ENCODE measurements at regions of chr1 and their contacts with region 1.

Region 1: DNA sequence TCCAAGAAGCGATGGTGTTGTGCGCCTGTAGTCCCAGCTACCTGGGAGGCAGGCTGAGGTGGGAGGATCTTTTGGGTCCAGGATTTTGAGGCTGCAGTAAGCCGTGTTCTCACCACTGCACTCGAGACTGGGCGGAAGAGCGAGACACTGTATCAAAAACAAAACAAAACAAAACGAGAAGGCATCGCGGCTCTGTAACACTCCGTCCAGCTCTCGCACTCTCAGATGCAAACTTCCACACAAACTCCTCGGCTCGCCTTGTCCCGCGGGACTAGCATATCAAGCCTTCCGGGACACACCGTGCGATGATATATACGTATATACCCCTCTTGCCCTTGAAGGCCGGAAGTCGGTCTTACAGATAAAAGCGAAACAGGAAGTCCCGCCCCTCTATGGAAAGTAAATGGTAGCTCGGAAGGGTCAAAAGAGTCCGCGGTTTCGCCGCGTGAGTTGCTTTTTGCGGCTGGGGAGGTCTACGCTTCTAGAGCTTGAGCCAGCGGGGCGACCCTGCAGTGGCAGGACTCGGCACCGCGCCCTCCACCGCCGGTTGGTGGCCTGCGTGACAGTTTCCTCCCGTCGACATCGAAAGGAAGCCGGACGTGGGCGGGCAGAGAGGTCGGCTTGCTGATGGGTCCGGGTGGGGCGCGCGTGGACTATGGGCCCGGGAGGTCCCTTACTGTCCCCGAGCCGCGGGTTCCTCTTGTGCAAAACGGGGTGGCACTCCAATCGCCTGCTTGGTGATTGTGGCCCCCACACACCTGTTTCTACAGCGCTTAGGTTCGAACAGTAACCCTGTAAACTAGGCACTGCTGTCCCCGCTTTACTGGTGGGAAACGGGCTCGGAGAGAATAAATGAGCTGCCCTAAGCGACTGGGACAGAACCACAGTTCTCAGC is at the start of gene COA6:
- DNase-seq: peak; percentile 82 to 96 (median 88)
- ATAC-seq: peak; percentile 84
- H3K4me3 ChIP-seq: peak within 1 kb of the TSS; percentile 82 to 97
- H3K4me3 Mint-ChIP-seq: peak within 1 kb of the TSS; percentile 97
- H3K27ac ChIP-seq: peak within 1 kb of the TSS; percentile 88 to 99
- H3K27ac Mint-ChIP-seq: peak within 1 kb of the TSS; percentile 99
- H3K4me1 ChIP-seq: peaks cover 19% of the 10 kb centered on the region
- H3K4me1 Mint-ChIP-seq: peaks cover 49% of the 10 kb centered on the region
- H3K27me3 ChIP-seq: no peaks in the 10 kb centered on the region
- H3K27me3 Mint-ChIP-seq: no peaks in the 10 kb centered on the region
- CTCF ChIP-seq: no peak
- total RNA-seq, gene COA6: 7.2 to 8.9 TPM

Region 2: DNA sequence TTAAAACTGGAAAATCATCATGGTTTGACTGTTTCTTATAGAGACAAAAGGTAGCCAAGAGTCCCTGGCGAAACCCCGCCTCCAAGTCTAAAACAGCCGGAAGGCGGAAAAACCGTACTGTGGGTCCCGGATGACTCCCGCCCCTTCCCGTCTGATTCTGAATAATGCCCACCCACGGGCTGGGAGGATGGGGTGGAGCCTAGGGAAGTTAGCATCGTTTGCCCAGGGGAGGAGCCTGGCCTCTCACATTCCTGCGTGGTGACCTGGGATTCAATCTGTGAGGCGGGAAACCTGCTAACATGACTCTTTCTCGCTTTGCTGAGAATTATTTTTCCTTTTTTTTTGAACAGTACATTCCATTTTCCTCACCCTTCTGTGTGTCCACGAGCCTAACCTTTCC is 634.5 kb before region 1 on chr1:
- CTCF ChIA-PET with region 1: no interaction called
- POLR2A ChIA-PET with region 1: no interaction called
- intact Hi-C with region 1: no loop called
- DNase-seq: no peak
- ATAC-seq: no peak
- H3K4me3 ChIP-seq: no peak overlapping the region
- H3K4me3 Mint-ChIP-seq: no peak overlapping the region
- H3K27ac ChIP-seq: no peak overlapping the region
- H3K27ac Mint-ChIP-seq: no peak overlapping the region
- H3K4me1 ChIP-seq: no peaks in the 10 kb centered on the region
- H3K4me1 Mint-ChIP-seq: no peaks in the 10 kb centered on the region
- H3K27me3 ChIP-seq: no peaks in the 10 kb centered on the region
- H3K27me3 Mint-ChIP-seq: peaks cover 4% of the 10 kb centered on the region
- CTCF ChIP-seq: no peak

Region 3: DNA sequence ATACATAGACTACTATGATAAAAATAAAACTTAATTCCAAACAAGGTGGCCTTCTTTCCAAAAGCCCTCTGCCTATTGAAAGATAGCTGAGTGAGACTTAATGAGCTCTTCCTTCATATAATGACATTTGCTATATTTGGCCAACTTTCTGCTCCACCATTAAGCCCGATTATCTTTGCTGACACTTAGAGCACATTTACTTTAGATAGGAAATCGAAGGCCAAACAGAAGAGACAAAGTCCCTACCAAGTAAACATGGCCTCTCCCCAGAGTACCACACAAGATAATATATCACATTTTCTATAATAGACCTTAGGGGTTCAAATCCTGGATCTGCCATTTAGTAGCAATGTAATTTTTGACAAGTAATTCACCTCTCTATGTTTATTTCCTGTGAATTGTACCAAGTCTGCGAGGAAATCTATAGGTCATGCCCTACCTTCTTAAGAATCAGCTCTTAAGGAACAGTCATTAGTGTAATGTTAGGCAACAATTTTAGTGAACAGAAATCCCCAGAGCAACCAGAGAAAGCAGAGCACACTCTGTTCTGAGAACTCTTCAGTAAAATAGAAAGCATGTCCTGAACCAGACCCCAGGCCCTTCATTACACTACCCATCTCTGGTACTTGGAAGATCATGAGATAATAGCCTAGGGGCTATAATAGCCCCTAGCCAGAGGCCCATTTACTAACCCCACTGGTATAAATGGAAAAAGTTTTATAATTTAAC is 17.4 kb before region 1 on chr1:
- CTCF ChIA-PET with region 1: interaction called, 4 read pairs
- POLR2A ChIA-PET with region 1: interaction called, 24 read pairs
- intact Hi-C with region 1: loop called (anchors 1 to 2 kb)
- DNase-seq: no peak
- ATAC-seq: no peak
- H3K4me3 ChIP-seq: peak overlapping the region in 1 of 2 experiments; percentile 51
- H3K4me3 Mint-ChIP-seq: no peak overlapping the region
- H3K27ac ChIP-seq: no peak overlapping the region
- H3K27ac Mint-ChIP-seq: no peak overlapping the region
- H3K4me1 ChIP-seq: no peaks in the 10 kb centered on the region
- H3K4me1 Mint-ChIP-seq: peaks cover 14% of the 10 kb centered on the region
- H3K27me3 ChIP-seq: no peaks in the 10 kb centered on the region
- H3K27me3 Mint-ChIP-seq: peaks cover 8% of the 10 kb centered on the region
- CTCF ChIP-seq: no peak

Region 4: GRCh38 chr1:234452091-234452954 is 79.0 kb after region 1 on chr1:
- CTCF ChIA-PET with region 1: no interaction called
- POLR2A ChIA-PET with region 1: no interaction called
- intact Hi-C with region 1: no loop called
- DNase-seq: no peak
- ATAC-seq: no peak
- H3K4me3 ChIP-seq: no peak overlapping the region
- H3K4me3 Mint-ChIP-seq: no peak overlapping the region
- H3K27ac ChIP-seq: no peak overlapping the region
- H3K27ac Mint-ChIP-seq: no peak overlapping the region
- H3K4me1 ChIP-seq: no peaks in the 10 kb centered on the region
- H3K4me1 Mint-ChIP-seq: no peaks in the 10 kb centered on the region
- H3K27me3 ChIP-seq: no peaks in the 10 kb centered on the region
- H3K27me3 Mint-ChIP-seq: no peaks in the 10 kb centered on the region
- CTCF ChIP-seq: no peak

Region 5: DNA sequence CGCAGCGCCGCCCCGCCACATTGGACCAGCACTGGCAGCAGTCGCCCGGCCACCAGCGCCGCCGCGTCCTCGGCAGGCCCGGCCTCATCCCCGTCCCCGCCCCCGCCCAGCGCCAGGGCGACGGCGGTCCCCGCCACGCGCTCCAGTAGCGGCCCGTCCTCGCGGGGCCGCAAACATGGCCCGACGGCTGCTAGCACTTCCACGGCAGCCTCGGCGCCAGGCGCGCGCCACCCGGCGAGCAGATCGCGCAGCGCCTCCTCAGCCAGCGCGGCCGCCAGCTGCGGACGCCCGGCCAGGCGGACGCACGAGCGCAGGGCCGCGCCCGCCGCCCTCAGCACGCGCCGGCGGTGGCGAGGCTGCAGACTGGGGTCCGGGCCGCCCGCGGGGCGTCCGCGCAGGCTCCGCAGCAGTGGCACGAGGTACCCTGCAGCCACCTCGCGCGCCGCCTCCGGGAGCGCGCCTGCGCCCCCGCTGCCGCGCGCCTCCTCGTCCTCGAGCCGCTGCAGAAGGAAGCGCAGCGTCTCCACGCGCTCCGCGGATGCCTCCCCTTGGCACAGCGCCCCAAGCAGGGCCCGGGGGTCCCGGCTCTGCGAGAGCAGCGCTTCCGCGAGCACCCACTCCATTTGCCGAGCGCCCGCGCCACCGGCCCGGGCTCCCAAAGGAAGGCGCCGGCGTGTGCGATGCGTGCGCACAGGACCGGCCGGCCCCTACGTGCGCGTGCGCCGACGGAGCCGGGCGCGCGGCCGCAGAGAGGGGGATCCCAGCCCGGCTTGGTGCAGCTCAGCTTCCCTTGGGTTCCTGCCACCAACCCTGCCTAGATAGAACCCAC is 105.4 kb after region 1 on chr1 and contains the start of gene TARBP1:
- CTCF ChIA-PET with region 1: interaction called, 3 read pairs
- POLR2A ChIA-PET with region 1: interaction called, 18 read pairs
- intact Hi-C with region 1: loop called (anchors 1 kb)
- DNase-seq: peak; percentile 53 to 91 (median 72)
- ATAC-seq: peak; percentile 69
- H3K4me3 ChIP-seq: peak within 1 kb of the TSS; percentile 64 to 85
- H3K4me3 Mint-ChIP-seq: peak within 1 kb of the TSS; percentile 90
- H3K27ac ChIP-seq: peak within 1 kb of the TSS; percentile 71 to 75
- H3K27ac Mint-ChIP-seq: peak within 1 kb of the TSS; percentile 96
- H3K4me1 ChIP-seq: peaks cover 33% of the 10 kb centered on the region
- H3K4me1 Mint-ChIP-seq: peaks cover 42% of the 10 kb centered on the region
- H3K27me3 ChIP-seq: no peaks in the 10 kb centered on the region
- H3K27me3 Mint-ChIP-seq: peaks cover 2% of the 10 kb centered on the region
- CTCF ChIP-seq: no peak
- total RNA-seq, gene TARBP1: 38.2 to 39.5 TPM

Region 6: DNA sequence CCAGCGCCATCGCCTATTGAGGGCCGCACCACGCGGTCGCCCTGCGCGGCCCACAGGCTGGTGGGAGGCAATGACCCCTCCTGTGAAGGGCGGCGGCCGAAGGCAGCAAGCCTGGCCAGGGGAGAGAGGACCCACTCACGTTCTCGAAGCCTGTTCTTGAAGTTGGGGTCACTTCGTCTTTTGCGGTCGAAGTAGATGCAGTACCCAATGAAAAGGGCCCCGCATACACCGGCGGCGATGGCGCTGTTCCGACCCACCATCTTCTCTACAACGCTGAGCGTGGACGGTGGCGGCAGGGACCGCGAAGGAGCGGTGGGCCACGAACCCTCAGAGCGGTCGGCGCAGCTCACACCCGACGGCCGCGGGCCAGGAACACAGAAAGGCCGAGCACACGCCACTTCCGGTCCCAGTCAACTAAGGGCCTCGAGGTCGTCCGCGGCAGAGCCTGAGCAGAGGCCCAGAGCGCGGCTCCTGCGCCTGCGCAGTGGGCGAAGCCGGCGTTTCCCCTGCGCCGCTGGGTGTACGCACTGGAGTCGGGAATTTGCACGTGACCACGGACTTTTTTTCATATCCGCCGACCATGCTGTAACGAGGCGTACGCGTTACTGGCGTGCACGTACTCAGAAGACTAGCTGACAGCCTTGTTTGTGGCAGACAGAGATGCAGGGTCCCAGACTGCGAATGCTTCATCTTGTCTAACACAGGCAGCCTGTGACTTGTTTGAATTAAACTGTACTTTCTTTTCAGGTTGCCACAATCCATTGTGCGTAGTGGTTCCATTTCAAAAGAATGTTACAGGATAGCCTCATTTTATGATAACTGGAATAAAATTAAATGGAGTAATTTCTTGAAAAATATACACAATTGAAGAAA is 755.4 kb after region 1 on chr1 and contains the start of gene TOMM20:
- CTCF ChIA-PET with region 1: no interaction called
- POLR2A ChIA-PET with region 1: no interaction called
- intact Hi-C with region 1: loop called (anchors 1 to 5 kb)
- DNase-seq: peak; percentile 88 to 98 (median 91)
- ATAC-seq: peak; percentile 88
- H3K4me3 ChIP-seq: peak within 1 kb of the TSS; percentile 83 to 98
- H3K4me3 Mint-ChIP-seq: peak within 1 kb of the TSS; percentile 88
- H3K27ac ChIP-seq: peak within 1 kb of the TSS; percentile 92 to 95
- H3K27ac Mint-ChIP-seq: peak within 1 kb of the TSS; percentile 93
- H3K4me1 ChIP-seq: peaks cover 36% of the 10 kb centered on the region
- H3K4me1 Mint-ChIP-seq: peaks cover 44% of the 10 kb centered on the region
- H3K27me3 ChIP-seq: no peaks in the 10 kb centered on the region
- H3K27me3 Mint-ChIP-seq: no peaks in the 10 kb centered on the region
- CTCF ChIP-seq: no peak
- total RNA-seq, gene TOMM20: 165 to 166 TPM